Right ventricle myocardium superior (tissue), 1 donor: ENCODE measurements at regions of chr12 and their contacts with region 1.

Region 1: DNA sequence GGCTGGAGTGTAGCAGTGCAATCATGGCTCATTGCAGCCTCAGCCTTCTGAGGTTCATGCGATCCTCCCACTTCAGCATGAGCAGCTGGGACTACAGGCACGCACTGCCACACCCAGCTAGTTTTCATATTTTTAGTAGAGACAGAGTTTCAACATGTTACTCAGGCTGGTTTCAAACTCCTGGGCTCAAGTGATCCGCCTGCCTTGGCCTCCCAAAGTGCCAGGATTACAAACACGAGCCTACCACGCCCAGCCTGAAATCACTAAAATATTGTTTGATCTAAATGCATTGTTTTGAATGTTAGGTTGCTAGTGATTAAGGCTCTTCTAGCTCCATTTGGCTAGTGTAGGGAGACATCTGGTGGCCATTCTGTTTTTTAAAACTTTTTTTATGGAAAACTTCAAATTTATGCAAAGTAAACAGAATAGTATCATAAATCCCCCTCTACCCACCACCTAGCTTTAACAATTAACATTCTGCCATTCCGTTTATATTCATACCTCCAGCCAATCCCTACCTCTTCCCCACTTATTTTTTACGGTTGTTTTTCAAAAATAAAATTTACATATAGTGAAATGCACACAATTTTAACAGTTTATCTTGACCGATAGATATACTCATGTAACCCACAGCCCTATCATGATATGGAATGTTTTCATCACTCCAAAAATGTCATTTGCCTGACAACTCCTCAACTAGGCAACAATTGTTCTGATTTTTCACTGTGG is 37.8 kb downstream of the MYO1H start:
- DNase-seq: no peak
- ATAC-seq: peak; percentile 77

Region 2: GRCh38 chr12:109264095-109264942 is 121.2 kb before region 1 on chr12:
- intact Hi-C with region 1: loop called (anchors 5 kb)
- DNase-seq: peak; percentile 84
- ATAC-seq: peak; percentile 65

Region 3: GRCh38 chr12:109428037-109428629 is 42.6 kb after region 1 on chr12:
- intact Hi-C with region 1: no loop called
- DNase-seq: peak; percentile 89
- ATAC-seq: peak; percentile 93